CD4-positive, alpha-beta T cell (primary cell): ENCODE measurements at regions of chr1 and their contacts with region 1.

Region 1: GRCh38 chr1:230917284-230918135 is 49.2 kb upstream of the C1orf198 start:
- DNase-seq: peak; percentile 51 to 90 (median 70)
- ATAC-seq: peak; percentile 73
- H3K4me3 ChIP-seq: no peak overlapping the region
- H3K4me3 Mint-ChIP-seq: no peak overlapping the region
- H3K27ac ChIP-seq: no peak overlapping the region
- H3K27ac Mint-ChIP-seq: peak overlapping the region; percentile 44
- H3K4me1 ChIP-seq: no peaks in the 10 kb centered on the region
- H3K4me1 Mint-ChIP-seq: no peaks in the 10 kb centered on the region
- H3K27me3 ChIP-seq: no peaks in the 10 kb centered on the region
- H3K27me3 Mint-ChIP-seq: no peaks in the 10 kb centered on the region
- CTCF ChIP-seq: peak; percentile 87

Region 2: GRCh38 chr1:230642263-230642959 is 275.1 kb before region 1 on chr1 and contains the start of gene COG2:
- CTCF ChIA-PET with region 1: no interaction called
- POLR2A ChIA-PET with region 1: no interaction called
- intact Hi-C with region 1: no loop called
- DNase-seq: peak; percentile 85 to 99 (median 96)
- ATAC-seq: peak; percentile 88
- H3K4me3 ChIP-seq: peak within 1 kb of the TSS; percentile 99
- H3K4me3 Mint-ChIP-seq: peak within 1 kb of the TSS; percentile 96
- H3K27ac ChIP-seq: peak within 1 kb of the TSS; percentile 64 to 78
- H3K27ac Mint-ChIP-seq: peak within 1 kb of the TSS; percentile 87
- H3K4me1 ChIP-seq: peaks cover 44% of the 10 kb centered on the region
- H3K4me1 Mint-ChIP-seq: peaks cover 54% of the 10 kb centered on the region
- H3K27me3 ChIP-seq: peaks cover 0 to 7% of the 10 kb centered on the region in 2 experiments
- H3K27me3 Mint-ChIP-seq: peaks cover 26% of the 10 kb centered on the region
- CTCF ChIP-seq: peak; percentile 100
- total RNA-seq, gene COG2: 17.3 to 21.4 TPM

Region 3: GRCh38 chr1:231091831-231092301 is 174.4 kb after region 1 on chr1:
- CTCF ChIA-PET with region 1: no interaction called
- POLR2A ChIA-PET with region 1: no interaction called
- intact Hi-C with region 1: loop called (anchors 1 to 5 kb)
- DNase-seq: peak in 13 of 14 experiments; percentile 11 to 64 (median 25)
- ATAC-seq: no peak
- H3K4me3 ChIP-seq: no peak overlapping the region
- H3K4me3 Mint-ChIP-seq: no peak overlapping the region
- H3K27ac ChIP-seq: no peak overlapping the region
- H3K27ac Mint-ChIP-seq: no peak overlapping the region
- H3K4me1 ChIP-seq: no peaks in the 10 kb centered on the region
- H3K4me1 Mint-ChIP-seq: no peaks in the 10 kb centered on the region
- H3K27me3 ChIP-seq: peaks cover 7 to 8% of the 10 kb centered on the region in 2 experiments
- H3K27me3 Mint-ChIP-seq: peaks cover 41% of the 10 kb centered on the region
- CTCF ChIP-seq: peak; percentile 44